Naive thymus-derived CD4-positive, alpha-beta T cell (primary cell): ENCODE measurements at regions of chr21 and their contacts with region 1.

Region 1: DNA sequence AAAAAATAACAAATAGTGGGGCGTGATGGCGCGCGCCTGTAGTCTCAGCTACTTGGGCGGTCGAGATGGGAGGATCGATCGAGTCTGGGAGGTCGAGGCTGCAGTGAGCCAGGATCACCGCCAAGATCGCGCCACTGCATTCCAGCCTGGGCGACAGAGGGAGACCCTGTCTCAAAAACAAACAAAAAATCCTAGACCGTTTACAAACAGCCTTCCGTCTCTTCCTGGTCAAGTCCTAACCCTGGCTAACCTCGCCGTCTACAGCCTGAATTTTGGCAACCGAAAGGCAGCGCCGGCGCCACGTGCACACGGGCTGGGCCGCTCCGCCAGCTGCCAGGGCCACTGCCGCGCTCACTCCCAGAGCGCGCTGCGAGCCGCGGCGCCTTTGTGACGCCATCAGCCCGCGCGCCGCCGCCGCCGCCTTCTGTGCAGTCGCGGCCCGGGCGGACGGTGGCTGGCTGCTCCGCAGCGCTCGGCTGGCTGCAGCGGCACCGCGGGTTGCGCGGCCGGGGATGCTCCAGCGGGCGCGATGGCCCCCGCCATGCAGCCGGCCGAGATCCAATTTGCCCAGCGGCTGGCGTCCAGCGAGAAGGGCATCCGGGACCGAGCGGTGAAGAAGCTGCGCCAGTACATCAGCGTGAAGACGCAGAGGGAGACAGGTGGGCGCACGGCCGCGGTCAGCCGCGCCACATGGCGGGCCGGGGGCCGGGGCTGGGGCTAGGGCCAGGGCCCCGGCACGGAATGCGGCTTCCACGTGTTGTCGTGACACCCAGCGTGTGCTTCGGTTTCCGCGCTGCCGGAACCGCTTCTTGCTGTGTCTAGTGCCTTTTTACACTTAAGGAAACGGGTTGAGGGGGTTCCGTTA is at the starts of genes HSF2BP and RRP1B:
- DNase-seq: peak; percentile 73 to 89 (median 84)
- ATAC-seq: peak; percentile 92
- H3K4me3 ChIP-seq: peak within 1 kb of the TSS; percentile 98
- H3K4me3 Mint-ChIP-seq: peak within 1 kb of the TSS; percentile 77 to 97 (median 94)
- H3K27ac ChIP-seq: peak within 1 kb of the TSS; percentile 91
- H3K27ac Mint-ChIP-seq: peak within 1 kb of the TSS; percentile 89 to 98 (median 94)
- H3K4me1 ChIP-seq: peaks cover 31 to 32% of the 10 kb centered on the region in 2 donors
- H3K4me1 Mint-ChIP-seq: peaks cover 33 to 64% (median 50%) of the 10 kb centered on the region in 7 donors
- H3K27me3 ChIP-seq: no peaks in the 10 kb centered on the region
- H3K27me3 Mint-ChIP-seq: no peaks in the 10 kb centered on the region
- total RNA-seq, gene HSF2BP: 0.31 to 1.4 (median 0.91) TPM
- total RNA-seq, gene RRP1B: 23.9 to 44.2 (median 39.6) TPM

Region 2: GRCh38 chr21:42878993-42879787 is 780.2 kb before region 1 on chr21 and contains the start of gene WDR4:
- CTCF ChIA-PET with region 1: no interaction called
- POLR2A ChIA-PET with region 1: no interaction called
- intact Hi-C with region 1: loop called in 1 of 2 experiments (anchors 1 kb)
- DNase-seq: peak; percentile 97 to 100 (median 99)
- ATAC-seq: peak; percentile 97
- H3K4me3 ChIP-seq: peak within 1 kb of the TSS; percentile 66
- H3K4me3 Mint-ChIP-seq: peak within 1 kb of the TSS; percentile 93 to 99 (median 97)
- H3K27ac ChIP-seq: peak within 1 kb of the TSS; percentile 85
- H3K27ac Mint-ChIP-seq: peak within 1 kb of the TSS; percentile 94 to 100 (median 98)
- H3K4me1 ChIP-seq: peaks cover 12 to 15% of the 10 kb centered on the region in 2 donors
- H3K4me1 Mint-ChIP-seq: peaks cover 17 to 41% (median 29%) of the 10 kb centered on the region in 7 donors
- H3K27me3 ChIP-seq: no peaks in the 10 kb centered on the region
- H3K27me3 Mint-ChIP-seq: peaks cover 0 to 6% (median 0%) of the 10 kb centered on the region in 5 donors
- total RNA-seq, gene WDR4: 24.4 to 39.1 (median 30.5) TPM

Region 3: DNA sequence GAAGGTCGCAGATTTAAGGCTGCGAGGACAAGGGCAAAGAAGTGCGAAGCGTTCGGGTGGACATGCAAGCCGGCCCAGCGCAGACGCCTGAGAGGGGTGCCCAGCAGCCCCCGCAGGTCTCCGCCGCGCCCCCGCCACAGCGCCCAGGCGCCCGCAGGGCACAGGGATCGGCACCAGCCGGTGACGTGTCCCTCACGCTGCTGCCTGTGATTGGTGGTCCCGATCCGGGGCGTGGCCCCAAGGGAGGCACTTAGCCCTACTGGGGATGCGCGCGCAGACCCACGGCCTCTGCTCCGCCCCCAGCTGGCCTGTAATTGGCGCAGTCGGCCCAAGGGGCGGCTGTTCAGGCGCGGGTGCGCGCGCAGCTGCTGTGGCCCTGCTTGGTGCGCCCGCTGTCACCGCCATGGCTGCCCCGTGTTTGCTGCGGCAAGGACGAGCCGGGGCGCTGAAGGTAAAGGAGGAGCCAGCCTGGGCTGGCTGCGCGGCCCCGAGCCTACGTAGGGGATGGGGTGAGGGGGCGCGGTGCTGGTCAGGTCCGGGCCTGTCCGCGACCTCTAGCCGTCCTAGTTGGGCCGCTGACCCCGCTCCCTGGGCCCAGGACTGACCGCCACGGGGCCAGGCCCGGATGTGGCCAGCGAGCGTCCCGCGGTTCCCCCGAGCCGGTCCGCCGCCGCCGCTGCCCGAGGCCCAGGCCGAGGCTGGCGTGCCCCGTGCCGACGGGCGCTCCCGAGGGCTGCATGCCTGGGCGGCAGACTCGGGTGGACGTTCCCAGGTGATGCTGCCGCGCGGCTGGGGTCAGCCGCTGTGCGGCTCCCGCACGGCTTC is 766.2 kb before region 1 on chr21 and contains the start of gene NDUFV3:
- CTCF ChIA-PET with region 1: no interaction called
- POLR2A ChIA-PET with region 1: no interaction called
- intact Hi-C with region 1: loop called in 1 of 2 experiments (anchors 1 kb)
- DNase-seq: peak; percentile 96 to 100 (median 98)
- ATAC-seq: peak; percentile 96
- H3K4me3 ChIP-seq: peak within 1 kb of the TSS; percentile 94
- H3K4me3 Mint-ChIP-seq: peak within 1 kb of the TSS; percentile 87 to 96 (median 90)
- H3K27ac ChIP-seq: peak within 1 kb of the TSS; percentile 97
- H3K27ac Mint-ChIP-seq: peak within 1 kb of the TSS; percentile 92 to 98 (median 97)
- H3K4me1 ChIP-seq: peaks cover 6 to 8% of the 10 kb centered on the region in 2 donors
- H3K4me1 Mint-ChIP-seq: peaks cover 14 to 25% (median 22%) of the 10 kb centered on the region in 7 donors
- H3K27me3 ChIP-seq: no peaks in the 10 kb centered on the region
- H3K27me3 Mint-ChIP-seq: no peaks in the 10 kb centered on the region
- total RNA-seq, gene NDUFV3: 25.3 to 33.1 (median 30.9) TPM

Region 4: GRCh38 chr21:43609501-43610340 is 49.6 kb before region 1 on chr21:
- CTCF ChIA-PET with region 1: no interaction called
- POLR2A ChIA-PET with region 1: no interaction called
- intact Hi-C with region 1: loop called in 1 of 2 experiments (anchors 5 kb)
- DNase-seq: no peak
- ATAC-seq: no peak
- H3K4me3 ChIP-seq: no peak overlapping the region
- H3K4me3 Mint-ChIP-seq: no peak overlapping the region
- H3K27ac ChIP-seq: no peak overlapping the region
- H3K27ac Mint-ChIP-seq: no peak overlapping the region
- H3K4me1 ChIP-seq: no peaks in the 10 kb centered on the region
- H3K4me1 Mint-ChIP-seq: peaks cover 0 to 14% (median 0%) of the 10 kb centered on the region in 7 donors
- H3K27me3 ChIP-seq: no peaks in the 10 kb centered on the region
- H3K27me3 Mint-ChIP-seq: peaks cover 0 to 8% (median 0%) of the 10 kb centered on the region in 5 donors

Region 5: DNA sequence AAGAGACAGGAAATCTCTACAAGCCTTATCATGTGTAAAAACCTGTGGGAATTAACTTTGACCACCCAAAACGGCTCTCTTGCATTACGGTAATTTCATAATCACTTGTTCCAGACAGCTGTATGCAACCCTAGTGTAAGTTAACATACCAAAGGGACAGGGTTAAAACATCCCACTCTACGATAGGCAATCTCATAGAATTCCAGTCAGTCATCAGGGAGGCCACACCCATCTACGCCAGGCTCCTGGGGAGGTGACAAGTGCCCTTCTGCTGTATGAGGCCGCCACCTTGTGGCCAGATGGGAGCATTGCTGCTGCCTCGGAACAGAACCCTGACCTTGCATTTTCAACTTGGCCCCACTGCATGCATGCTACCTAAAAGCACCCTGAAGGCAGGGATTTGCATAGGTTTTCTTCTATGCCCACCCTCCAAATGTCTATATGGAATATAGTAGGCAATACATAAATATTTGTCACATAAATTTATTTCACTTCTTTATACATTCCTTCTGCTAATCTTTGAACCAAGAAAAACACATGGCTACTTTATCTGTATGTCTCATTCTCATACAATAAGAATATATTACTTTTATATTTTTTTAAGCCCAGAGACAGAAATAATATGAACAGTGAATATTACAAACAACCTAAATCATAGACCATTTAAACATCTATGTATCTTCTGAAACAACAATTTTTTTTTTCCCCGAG is 12.7 kb before region 1 on chr21:
- CTCF ChIA-PET with region 1: interaction called, 3 read pairs
- POLR2A ChIA-PET with region 1: no interaction called
- intact Hi-C with region 1: loop called (anchors 1 to 2 kb)
- DNase-seq: peak; percentile 70 to 84 (median 79)
- ATAC-seq: peak; percentile 100
- H3K4me3 ChIP-seq: no peak overlapping the region
- H3K4me3 Mint-ChIP-seq: peak overlapping the region in 4 of 10 donors; percentile 42 to 71 (median 66)
- H3K27ac ChIP-seq: no peak overlapping the region
- H3K27ac Mint-ChIP-seq: peak overlapping the region in 6 of 9 donors; percentile 30 to 88 (median 58)
- H3K4me1 ChIP-seq: peaks cover 0 to 6% of the 10 kb centered on the region in 2 donors
- H3K4me1 Mint-ChIP-seq: peaks cover 7 to 24% (median 16%) of the 10 kb centered on the region in 7 donors
- H3K27me3 ChIP-seq: no peaks in the 10 kb centered on the region
- H3K27me3 Mint-ChIP-seq: peaks cover 0 to 21% (median 0%) of the 10 kb centered on the region in 5 donors

Region 6: GRCh38 chr21:43676391-43676790 is 17.0 kb after region 1 on chr21:
- CTCF ChIA-PET with region 1: no interaction called
- POLR2A ChIA-PET with region 1: interaction called, 17 read pairs
- intact Hi-C with region 1: no loop called
- DNase-seq: no peak
- ATAC-seq: no peak
- H3K4me3 ChIP-seq: no peak overlapping the region
- H3K4me3 Mint-ChIP-seq: no peak overlapping the region
- H3K27ac ChIP-seq: no peak overlapping the region
- H3K27ac Mint-ChIP-seq: no peak overlapping the region
- H3K4me1 ChIP-seq: no peaks in the 10 kb centered on the region
- H3K4me1 Mint-ChIP-seq: peaks cover 2 to 23% (median 11%) of the 10 kb centered on the region in 7 donors
- H3K27me3 ChIP-seq: no peaks in the 10 kb centered on the region
- H3K27me3 Mint-ChIP-seq: no peaks in the 10 kb centered on the region

Region 7: GRCh38 chr21:43718872-43719747 is 59.7 kb after region 1 on chr21 and contains the start of gene PDXK:
- CTCF ChIA-PET with region 1: no interaction called
- POLR2A ChIA-PET with region 1: interaction called, 3 read pairs
- intact Hi-C with region 1: loop called (anchors 1 to 10 kb)
- DNase-seq: peak; percentile 73 to 90 (median 77)
- ATAC-seq: peak; percentile 92
- H3K4me3 ChIP-seq: peak within 1 kb of the TSS; percentile 90
- H3K4me3 Mint-ChIP-seq: peak within 1 kb of the TSS; percentile 77 to 93 (median 87)
- H3K27ac ChIP-seq: peak within 1 kb of the TSS; percentile 86
- H3K27ac Mint-ChIP-seq: peak within 1 kb of the TSS; percentile 43 to 86 (median 72)
- H3K4me1 ChIP-seq: peaks cover 12 to 19% of the 10 kb centered on the region in 2 donors
- H3K4me1 Mint-ChIP-seq: peaks cover 20 to 31% (median 26%) of the 10 kb centered on the region in 7 donors
- H3K27me3 ChIP-seq: no peaks in the 10 kb centered on the region
- H3K27me3 Mint-ChIP-seq: peaks cover 0 to 19% (median 0%) of the 10 kb centered on the region in 5 donors
- total RNA-seq, gene PDXK: 71.1 to 103 (median 97.0) TPM